ENCODE measurements at regions of chr1 and their contacts with region 1.

Region 1: GRCh38 chr1:67748630-67749029 is 63.6 kb downstream of the GADD45A start:
- DNase-seq: no peak
- H3K4me3 ChIP-seq: peak overlapping the region; percentile 2 to 32
- H3K27ac ChIP-seq: peak overlapping the region; percentile 86 to 90
- H3K4me1 ChIP-seq: peaks cover 0 to 98% (median 75%) of the 10 kb centered on the region in 4 donors
- H3K27me3 ChIP-seq: no peaks in the 10 kb centered on the region
- CTCF ChIP-seq: no peak

Region 2: DNA sequence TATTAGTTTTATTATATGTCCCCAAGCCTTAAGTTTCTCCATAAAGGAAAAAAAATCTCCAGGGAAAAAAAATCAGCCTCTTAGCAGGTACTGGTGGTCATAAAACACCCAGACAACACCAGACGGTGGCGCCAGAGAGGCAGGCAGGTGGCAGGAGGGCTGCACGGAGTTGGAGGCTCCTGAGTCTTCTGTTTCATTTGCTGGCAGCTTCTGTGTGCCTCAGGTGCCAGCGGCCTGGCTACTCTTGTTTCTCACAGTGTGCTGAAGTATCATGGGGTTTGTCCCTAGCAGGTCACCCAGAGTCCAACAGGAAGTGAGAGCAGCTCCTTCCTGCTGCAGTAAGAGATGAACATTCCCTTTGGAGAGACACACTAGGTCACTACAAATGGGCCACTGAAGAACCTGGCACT is 186.9 kb before region 1 on chr1:
- intact Hi-C with region 1: loop called (anchors 10 kb)
- DNase-seq: peak; percentile 92 to 96
- H3K4me3 ChIP-seq: no peak overlapping the region
- H3K27ac ChIP-seq: peak overlapping the region in 1 of 2 donors; percentile 24
- H3K4me1 ChIP-seq: peaks cover 0 to 33% (median 13%) of the 10 kb centered on the region in 4 donors
- H3K27me3 ChIP-seq: no peaks in the 10 kb centered on the region
- CTCF ChIP-seq: peak; percentile 83 to 91

Region 3: GRCh38 chr1:67708606-67709005 is 40.0 kb before region 1 on chr1:
- intact Hi-C with region 1: loop called (anchors 5 kb)
- DNase-seq: no peak
- H3K4me3 ChIP-seq: no peak overlapping the region
- H3K27ac ChIP-seq: peak overlapping the region; percentile 73 to 79
- H3K4me1 ChIP-seq: peaks cover 0 to 77% (median 51%) of the 10 kb centered on the region in 4 donors
- H3K27me3 ChIP-seq: no peaks in the 10 kb centered on the region
- CTCF ChIP-seq: no peak

Region 4: GRCh38 chr1:67785847-67786753 is 37.5 kb after region 1 on chr1:
- intact Hi-C with region 1: no loop called
- DNase-seq: no peak
- H3K4me3 ChIP-seq: no peak overlapping the region
- H3K27ac ChIP-seq: peak overlapping the region; percentile 48 to 56
- H3K4me1 ChIP-seq: peaks cover 0 to 75% (median 38%) of the 10 kb centered on the region in 4 donors
- H3K27me3 ChIP-seq: no peaks in the 10 kb centered on the region
- CTCF ChIP-seq: no peak

Region 5: GRCh38 chr1:67921725-67922489 is 173.3 kb after region 1 on chr1:
- intact Hi-C with region 1: no loop called
- DNase-seq: no peak
- H3K4me3 ChIP-seq: no peak overlapping the region
- H3K27ac ChIP-seq: no peak overlapping the region
- H3K4me1 ChIP-seq: no peaks in the 10 kb centered on the region
- H3K27me3 ChIP-seq: no peaks in the 10 kb centered on the region
- CTCF ChIP-seq: no peak